RWPE1 (cell line): ENCODE measurements at regions of chr14 and their contacts with region 1.

Region 1: DNA sequence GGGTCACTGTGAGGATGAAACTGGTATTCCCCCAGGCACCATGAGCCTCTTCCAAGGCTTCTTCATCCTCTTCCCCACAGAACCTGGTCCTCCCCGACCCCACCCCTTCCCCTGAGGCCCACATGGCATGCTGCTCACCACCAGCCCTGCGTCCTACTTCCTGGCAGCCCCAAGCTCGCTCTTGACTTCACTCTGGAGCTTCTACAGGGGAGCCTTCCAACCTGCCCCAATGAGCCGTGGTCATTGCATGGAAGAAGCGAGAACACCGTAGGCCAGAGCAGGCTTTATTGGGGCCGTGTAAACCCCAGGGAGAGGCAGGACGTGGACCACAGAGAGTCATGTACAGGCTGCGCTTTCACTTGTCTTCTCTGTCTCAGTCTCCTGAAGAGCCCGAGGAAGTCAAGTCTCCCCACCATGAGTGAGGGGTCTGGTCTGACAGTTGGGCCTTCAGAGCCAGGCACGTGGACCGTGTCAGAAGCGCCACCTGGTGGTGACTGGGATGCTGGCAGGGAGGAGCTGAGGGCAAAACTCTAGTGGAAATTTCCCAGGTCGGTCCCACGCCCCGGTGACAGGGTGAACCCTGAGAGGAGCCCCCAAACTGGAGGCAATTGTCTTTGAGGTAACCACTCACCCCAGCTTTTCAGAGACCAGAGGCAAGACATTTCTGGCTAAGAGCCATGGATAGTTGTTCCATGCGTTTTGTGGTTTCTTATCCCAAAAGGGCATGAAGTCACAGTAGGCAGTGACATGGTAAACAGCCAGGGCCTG is 17.5 kb downstream of the RPS6KL1 start:
- DNase-seq: peak; percentile 58
- H3K27ac ChIP-seq: peak overlapping the region; percentile 34
- CTCF ChIP-seq: peak; percentile 90

Region 2: GRCh38 chr14:74493343-74494261 is 412.0 kb before region 1 on chr14 and contains the start of gene ISCA2:
- CTCF ChIA-PET with region 1: no interaction called
- POLR2A ChIA-PET with region 1: no interaction called
- DNase-seq: peak; percentile 99
- H3K27ac ChIP-seq: peak within 1 kb of the TSS; percentile 89
- CTCF ChIP-seq: no peak

Region 3: GRCh38 chr14:74841230-74842207 is 64.0 kb before region 1 on chr14:
- CTCF ChIA-PET with region 1: no interaction called
- POLR2A ChIA-PET with region 1: no interaction called
- DNase-seq: no peak
- H3K27ac ChIP-seq: no peak overlapping the region
- CTCF ChIP-seq: no peak

Region 4: GRCh38 chr14:74860906-74861733 is 44.4 kb before region 1 on chr14:
- CTCF ChIA-PET with region 1: interaction called, 28 read pairs
- POLR2A ChIA-PET with region 1: no interaction called
- DNase-seq: peak; percentile 73
- H3K27ac ChIP-seq: no peak overlapping the region
- CTCF ChIP-seq: peak; percentile 80

Region 5: GRCh38 chr14:74893614-74894091 is 11.9 kb before region 1 on chr14:
- CTCF ChIA-PET with region 1: interaction called, 10 read pairs
- POLR2A ChIA-PET with region 1: no interaction called
- DNase-seq: no peak
- H3K27ac ChIP-seq: no peak overlapping the region
- CTCF ChIP-seq: no peak

Region 6: GRCh38 chr14:74917646-74918081 is 12.1 kb after region 1 on chr14:
- CTCF ChIA-PET with region 1: interaction called, 10 read pairs
- POLR2A ChIA-PET with region 1: no interaction called
- DNase-seq: no peak
- H3K27ac ChIP-seq: peak overlapping the region; percentile 49
- CTCF ChIP-seq: no peak

Region 7: GRCh38 chr14:74945823-74946682 is 40.5 kb after region 1 on chr14:
- CTCF ChIA-PET with region 1: interaction called, 10 read pairs
- POLR2A ChIA-PET with region 1: no interaction called
- DNase-seq: peak; percentile 72
- H3K27ac ChIP-seq: peak overlapping the region; percentile 74
- CTCF ChIP-seq: peak; percentile 89

Region 8: DNA sequence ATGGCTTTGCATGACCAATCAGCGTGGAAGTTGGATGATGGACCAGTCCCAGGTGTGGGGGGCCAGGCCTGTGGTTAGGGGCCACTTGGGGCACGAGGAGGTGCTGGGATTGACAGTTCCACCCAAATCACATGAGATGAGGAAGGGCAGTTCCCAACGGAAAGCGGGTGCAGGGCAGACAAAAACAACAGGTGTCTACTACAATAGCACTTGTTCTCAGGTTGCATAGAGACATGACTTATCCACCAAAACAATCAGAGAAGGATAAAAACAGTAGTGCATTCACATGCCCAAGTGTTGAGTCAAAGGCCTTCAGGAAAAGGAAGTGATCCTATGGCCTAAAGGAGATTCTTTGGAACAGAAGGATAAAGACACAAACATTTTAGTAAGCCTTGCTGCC is 82.6 kb after region 1 on chr14:
- CTCF ChIA-PET with region 1: no interaction called
- POLR2A ChIA-PET with region 1: no interaction called
- DNase-seq: peak; percentile 82
- H3K27ac ChIP-seq: peak overlapping the region; percentile 48
- CTCF ChIP-seq: no peak

Region 9: DNA sequence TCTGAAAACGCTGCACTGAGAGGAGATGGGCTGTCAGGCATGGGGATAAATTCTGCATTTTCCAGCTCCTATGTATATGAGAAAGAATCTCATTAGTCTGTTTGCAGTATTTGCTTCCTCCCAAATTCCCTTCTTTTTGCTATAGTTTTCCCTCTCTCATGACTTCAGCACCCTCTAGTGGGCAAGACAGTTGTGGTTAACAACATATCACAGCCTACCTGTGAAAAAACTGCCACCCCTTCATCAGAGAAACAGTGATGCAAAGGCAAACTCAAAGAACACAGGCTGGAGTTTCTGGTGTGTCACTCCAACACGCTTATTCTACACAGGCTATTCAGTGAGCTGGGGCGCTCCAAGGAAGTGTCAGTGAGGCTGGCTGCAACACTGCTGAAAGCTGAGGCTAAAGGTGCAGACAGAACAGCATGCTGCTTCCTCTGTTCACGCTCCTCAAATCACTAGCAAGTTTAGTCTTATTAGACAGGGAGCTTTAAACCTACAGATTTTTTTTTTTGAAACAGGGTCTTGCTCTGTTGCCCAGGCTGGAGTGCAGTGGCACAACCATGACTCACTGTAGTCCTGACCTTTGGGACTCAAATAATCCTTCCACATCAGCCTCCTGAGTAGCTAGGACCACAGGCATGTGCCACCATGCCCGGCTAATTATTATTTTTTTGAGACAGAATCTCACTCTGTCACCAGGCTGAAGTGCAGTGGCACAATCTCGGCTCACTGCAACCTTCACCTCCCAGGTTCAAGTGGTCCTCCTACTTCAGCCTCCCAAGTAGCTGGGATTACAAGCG is 183.2 kb after region 1 on chr14:
- CTCF ChIA-PET with region 1: interaction called, 20 read pairs
- POLR2A ChIA-PET with region 1: no interaction called
- DNase-seq: peak; percentile 54
- H3K27ac ChIP-seq: no peak overlapping the region
- CTCF ChIP-seq: peak; percentile 79

Region 10: DNA sequence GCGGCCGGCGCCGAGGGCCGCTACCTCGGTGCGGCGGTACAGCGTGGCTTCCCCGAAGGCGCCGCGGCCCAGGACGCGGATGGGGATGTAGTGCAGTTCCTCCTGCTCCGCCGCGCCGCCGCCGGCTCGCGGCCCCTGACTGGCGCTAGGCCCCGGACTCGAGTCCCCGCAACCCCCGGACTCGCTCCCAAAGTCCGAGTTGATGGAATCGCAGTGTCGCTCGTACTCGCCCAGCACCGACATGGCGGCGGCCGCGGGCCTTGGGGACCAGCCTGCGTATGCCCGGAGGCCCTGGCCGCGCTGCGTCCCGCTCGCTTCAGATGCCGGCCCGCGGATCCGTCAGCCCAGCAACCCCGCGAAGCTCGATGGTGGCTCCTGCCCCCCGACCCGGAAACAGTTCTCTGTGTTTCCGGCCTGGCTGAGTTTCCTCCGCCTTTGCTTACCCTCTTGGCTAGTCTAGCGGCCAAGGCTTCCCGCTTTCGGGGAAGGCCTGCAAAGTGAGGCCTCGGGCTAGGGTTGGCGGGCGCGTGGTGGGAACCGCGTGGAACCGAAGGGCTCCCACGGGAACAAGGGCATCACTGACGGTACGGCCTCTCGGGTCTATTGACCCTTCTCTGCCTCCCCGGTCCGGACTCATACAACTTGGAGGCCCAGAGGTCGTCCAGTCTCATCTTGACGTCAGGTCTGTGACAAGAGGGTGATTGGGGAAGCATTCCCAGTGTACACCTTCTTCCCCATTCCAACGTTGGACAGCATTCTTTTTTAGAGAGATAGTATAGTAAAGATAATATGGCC is 221.3 kb after region 1 on chr14 and contains the start of gene NEK9:
- CTCF ChIA-PET with region 1: no interaction called
- POLR2A ChIA-PET with region 1: no interaction called
- DNase-seq: peak; percentile 92
- H3K27ac ChIP-seq: peak within 1 kb of the TSS; percentile 92
- CTCF ChIP-seq: no peak